HCT116 (cell line): ENCODE measurements at regions of chr1 and their contacts with region 1.

Region 1: GRCh38 chr1:205907794-205908193 is 35.5 kb downstream of the SLC26A9 start:
- DNase-seq: peak; percentile 39
- ATAC-seq: peak; percentile 95
- H3K4me3 ChIP-seq: no peak overlapping the region
- H3K27ac ChIP-seq: no peak overlapping the region
- H3K4me1 ChIP-seq: no peaks in the 10 kb centered on the region
- H3K27me3 ChIP-seq: peaks cover 3% of the 10 kb centered on the region; the same call in 1 of the 2 replicates
- CTCF ChIP-seq: peak; percentile 66 to 82 (median 78)
- POLR2A ChIP-seq: no peak
- RAD21 ChIP-seq: peak; percentile 70

Region 2: DNA sequence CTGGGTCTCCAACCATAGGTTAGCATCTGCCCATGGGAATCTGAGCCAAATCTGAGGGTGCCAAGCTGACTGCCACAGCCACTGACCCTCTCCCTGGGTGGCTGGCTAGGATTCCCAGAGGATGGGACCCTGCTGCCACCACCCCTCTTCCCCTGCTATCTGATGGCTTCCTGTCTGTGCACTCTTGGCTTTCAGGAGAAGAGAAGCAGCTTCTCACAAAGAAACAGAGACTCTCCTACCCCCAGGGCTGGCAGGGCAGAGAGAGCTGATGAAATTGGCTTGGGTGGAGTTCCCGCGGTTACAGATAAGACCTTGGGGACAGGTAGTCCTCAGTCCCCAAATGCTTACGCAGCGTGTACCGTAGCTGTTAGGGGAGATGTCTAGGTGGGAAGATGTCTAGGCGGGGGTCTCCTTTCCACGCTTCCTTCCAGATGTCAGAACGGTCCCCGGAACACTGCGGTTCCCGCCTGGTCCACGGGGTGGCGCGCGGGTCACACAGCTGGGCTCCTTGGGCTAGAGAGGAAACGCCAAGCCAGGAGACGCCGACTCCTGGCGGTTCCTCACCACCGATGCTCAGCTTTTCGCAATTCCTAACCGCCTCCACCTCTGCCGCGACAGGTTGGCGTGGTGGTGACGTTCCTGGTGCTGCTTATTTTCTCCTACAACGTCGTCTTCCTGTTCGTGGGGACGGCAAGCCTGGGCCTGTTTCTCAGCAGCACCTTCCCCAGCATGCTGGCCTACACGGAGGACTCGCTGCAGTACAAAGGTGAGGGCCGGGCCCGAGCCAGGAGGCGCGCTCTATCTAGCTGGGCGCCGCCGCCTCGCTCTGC is 316.1 kb before region 1 on chr1:
- CTCF ChIA-PET with region 1: interaction called, 4 read pairs
- POLR2A ChIA-PET with region 1: no interaction called
- RAD21 ChIA-PET with region 1: no interaction called
- intact Hi-C with region 1: loop called (anchors 10 kb)
- DNase-seq: peak; percentile 65
- ATAC-seq: peak; percentile 89
- H3K4me3 ChIP-seq: peak overlapping the region; percentile 37 to 53
- H3K27ac ChIP-seq: peak overlapping the region; percentile 14; the same call in 1 of the 2 replicates
- H3K4me1 ChIP-seq: peaks cover 0 to 11% of the 10 kb centered on the region in 2 experiments; a peak in 2 of 4 replicates
- H3K27me3 ChIP-seq: no peaks in the 10 kb centered on the region
- CTCF ChIP-seq: peak; percentile 97 to 98 (median 98)
- POLR2A ChIP-seq: no peak
- RAD21 ChIP-seq: peak; percentile 99

Region 3: DNA sequence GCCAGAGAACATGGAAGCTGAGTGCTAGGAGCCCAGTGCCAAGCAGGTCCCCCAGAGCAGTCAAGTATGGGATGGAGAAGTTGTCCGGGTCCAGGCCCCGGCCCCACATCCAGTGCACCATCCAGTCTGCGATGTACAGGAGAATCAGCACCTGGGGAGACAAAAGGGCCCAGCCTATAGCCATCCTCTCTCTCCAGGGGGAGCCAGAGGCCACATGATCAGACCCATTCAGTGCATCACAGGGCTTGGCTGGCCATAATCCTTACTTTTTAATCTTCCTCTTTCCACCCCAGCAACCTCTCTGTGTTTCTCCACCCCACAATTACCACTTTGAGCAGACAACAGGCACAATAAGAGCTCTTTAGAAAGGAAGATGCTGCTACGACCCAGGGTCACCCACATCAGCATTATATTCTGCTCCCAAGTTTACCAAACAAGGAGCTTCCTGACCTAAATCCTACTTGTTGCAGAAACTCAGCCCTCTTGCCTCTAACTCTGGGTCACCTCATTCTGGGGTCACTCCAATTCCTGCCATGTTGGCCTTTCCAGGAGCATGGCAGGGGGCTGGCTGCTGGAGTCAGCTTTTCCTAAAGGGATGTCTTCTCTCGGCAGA is 116.1 kb before region 1 on chr1:
- CTCF ChIA-PET with region 1: interaction called, 37 read pairs
- POLR2A ChIA-PET with region 1: no interaction called
- RAD21 ChIA-PET with region 1: interaction called, 4 to 14 read pairs
- intact Hi-C with region 1: loop called (anchors 1 kb)
- DNase-seq: no peak
- ATAC-seq: peak; percentile 100
- H3K4me3 ChIP-seq: no peak overlapping the region
- H3K27ac ChIP-seq: no peak overlapping the region
- H3K4me1 ChIP-seq: no peaks in the 10 kb centered on the region
- H3K27me3 ChIP-seq: no peaks in the 10 kb centered on the region
- CTCF ChIP-seq: peak; percentile 78 to 83 (median 78)
- POLR2A ChIP-seq: no peak
- RAD21 ChIP-seq: peak; percentile 91

Region 4: GRCh38 chr1:205812878-205813754 is 94.7 kb before region 1 on chr1 and contains the start of gene SLC41A1:
- CTCF ChIA-PET with region 1: interaction called, 6 read pairs
- POLR2A ChIA-PET with region 1: no interaction called
- RAD21 ChIA-PET with region 1: no interaction called
- intact Hi-C with region 1: loop called (anchors 5 kb)
- DNase-seq: peak; percentile 76
- ATAC-seq: peak; percentile 93
- H3K4me3 ChIP-seq: peak within 1 kb of the TSS; percentile 64 to 72
- H3K27ac ChIP-seq: peak within 1 kb of the TSS; percentile 58
- H3K4me1 ChIP-seq: peaks cover 7 to 20% of the 10 kb centered on the region in 2 experiments; a peak in 3 of 4 replicates
- H3K27me3 ChIP-seq: no peaks in the 10 kb centered on the region
- CTCF ChIP-seq: no peak
- POLR2A ChIP-seq: peak; percentile 68
- RAD21 ChIP-seq: no peak
- total RNA-seq, gene SLC41A1: 35.9 TPM

Region 5: DNA sequence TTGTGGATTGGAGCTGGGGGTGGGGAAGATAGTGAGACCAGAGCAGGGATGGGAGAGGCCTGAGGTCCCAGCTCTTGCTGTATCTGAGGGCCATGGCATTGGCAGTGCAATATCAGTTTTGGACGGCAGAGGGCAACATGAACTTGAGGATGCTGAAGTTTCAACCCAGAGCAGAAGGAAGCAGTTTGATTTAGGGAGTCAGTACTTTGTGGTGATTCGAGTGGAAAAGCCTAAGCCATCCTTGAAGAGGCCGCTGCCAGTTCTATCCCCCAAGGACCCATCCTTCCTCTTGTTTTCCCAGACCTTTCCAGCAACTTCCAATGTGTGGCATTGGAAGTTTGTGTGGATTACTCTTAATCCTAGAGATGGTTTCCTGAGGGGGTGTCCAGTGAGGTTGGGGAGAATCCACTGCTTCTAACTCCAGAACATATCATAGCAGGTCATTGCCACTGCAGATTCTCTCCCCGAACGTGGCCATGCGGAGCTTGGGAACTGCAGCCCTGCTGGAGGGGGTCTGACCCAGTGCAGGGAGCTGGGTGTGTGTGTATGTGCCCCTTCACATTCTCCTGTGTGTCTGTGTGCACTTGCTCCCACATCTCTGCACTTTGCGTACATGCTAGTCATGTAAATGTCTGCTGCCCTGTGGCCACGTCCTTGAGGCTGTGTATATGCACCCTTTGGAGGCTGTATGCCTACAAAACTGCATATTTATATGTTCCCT is 11.4 kb after region 1 on chr1:
- CTCF ChIA-PET with region 1: interaction called, 18 read pairs
- POLR2A ChIA-PET with region 1: no interaction called
- RAD21 ChIA-PET with region 1: interaction called in 1 of 2 experiments, 3 read pairs
- intact Hi-C with region 1: no loop called
- DNase-seq: peak; percentile 74
- ATAC-seq: peak; percentile 96
- H3K4me3 ChIP-seq: no peak overlapping the region
- H3K27ac ChIP-seq: no peak overlapping the region
- H3K4me1 ChIP-seq: no peaks in the 10 kb centered on the region
- H3K27me3 ChIP-seq: no peaks in the 10 kb centered on the region
- CTCF ChIP-seq: peak; percentile 86 to 94 (median 89)
- POLR2A ChIP-seq: no peak
- RAD21 ChIP-seq: peak; percentile 98

Region 6: DNA sequence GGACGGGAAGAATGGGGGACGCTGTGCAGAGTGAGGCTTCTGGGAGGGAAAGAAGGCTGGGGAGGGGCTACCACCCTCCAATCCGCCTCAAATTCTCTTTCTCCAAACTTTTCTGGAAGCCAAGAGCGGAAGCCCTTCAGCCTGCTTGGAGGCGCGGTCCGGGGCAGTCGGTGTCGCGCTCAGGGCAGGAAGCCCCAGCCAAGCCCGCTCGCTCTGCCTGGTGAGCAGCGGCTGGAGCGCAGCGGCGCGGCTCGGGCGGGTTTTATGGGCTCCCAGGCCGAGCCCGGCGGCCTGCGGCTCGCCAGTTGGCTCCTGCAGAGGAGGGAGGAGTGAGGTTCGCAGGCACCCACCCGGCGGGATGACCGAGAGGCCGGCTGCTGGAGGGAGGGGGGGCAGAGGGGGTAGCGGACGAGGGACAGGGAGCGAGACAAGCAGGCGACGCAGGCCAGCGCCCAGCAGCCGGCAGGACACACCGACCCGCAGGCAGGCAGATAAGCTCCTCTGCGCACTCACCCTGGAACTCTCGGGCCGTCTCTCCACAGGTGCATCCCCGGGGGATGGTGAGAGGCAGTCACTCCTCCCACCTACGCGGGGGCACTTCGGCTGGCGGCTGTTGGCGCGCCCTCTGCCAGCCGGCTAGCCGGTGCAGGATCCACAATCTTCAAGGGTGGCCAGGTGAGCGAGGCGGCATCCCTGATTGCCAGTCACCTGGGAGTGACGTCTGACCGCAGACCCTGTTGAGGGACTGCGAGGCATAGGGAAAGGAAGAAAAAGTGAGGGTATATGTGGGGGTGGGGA is 209.6 kb after region 1 on chr1 and contains the start of gene AVPR1B:
- CTCF ChIA-PET with region 1: no interaction called
- POLR2A ChIA-PET with region 1: no interaction called
- RAD21 ChIA-PET with region 1: no interaction called
- intact Hi-C with region 1: no loop called
- DNase-seq: no peak
- ATAC-seq: peak; percentile 91
- H3K4me3 ChIP-seq: peak within 1 kb of the TSS; percentile 19 to 48
- H3K27ac ChIP-seq: no peak within 1 kb of the TSS
- H3K4me1 ChIP-seq: peaks cover 0 to 10% of the 10 kb centered on the region in 2 experiments; a peak in 1 of 4 replicates
- H3K27me3 ChIP-seq: no peaks in the 10 kb centered on the region
- CTCF ChIP-seq: peak in 1 of 3 experiments; percentile 7; a peak in 1 of 6 replicates
- POLR2A ChIP-seq: no peak
- RAD21 ChIP-seq: no peak
- total RNA-seq, gene AVPR1B: not detected